Activated naive CD4-positive, alpha-beta T cell treated with anti-CD3 and anti-CD28 coated beads for 36 hours (primary cell): ENCODE measurements at regions of chr11 and their contacts with region 1.

Region 1: DNA sequence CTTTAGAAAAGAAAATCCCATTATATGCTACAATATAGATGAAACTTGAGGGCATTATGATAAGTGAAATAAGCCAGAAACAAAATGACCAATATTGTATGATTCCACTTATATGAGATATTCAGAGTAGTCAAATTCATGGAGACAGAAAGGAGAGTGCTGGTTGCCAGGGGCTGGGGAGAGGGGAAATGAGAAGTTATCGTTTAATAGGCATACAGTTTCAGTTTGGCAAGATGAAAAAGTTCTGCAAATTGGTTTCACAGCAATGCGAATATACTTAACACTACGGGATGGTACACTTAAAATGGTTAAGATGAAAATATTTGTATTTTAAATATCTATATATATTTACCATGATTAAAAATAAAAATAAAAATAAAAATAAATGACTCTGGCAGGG is 31.1 kb upstream of the RDX start:
- DNase-seq: no peak
- H3K4me3 Mint-ChIP-seq: peak overlapping the region; percentile 81
- H3K27ac Mint-ChIP-seq: peak overlapping the region; percentile 65
- H3K4me1 Mint-ChIP-seq: peaks cover 18% of the 10 kb centered on the region
- H3K27me3 Mint-ChIP-seq: peaks cover under 1% of the 10 kb centered on the region

Region 2: DNA sequence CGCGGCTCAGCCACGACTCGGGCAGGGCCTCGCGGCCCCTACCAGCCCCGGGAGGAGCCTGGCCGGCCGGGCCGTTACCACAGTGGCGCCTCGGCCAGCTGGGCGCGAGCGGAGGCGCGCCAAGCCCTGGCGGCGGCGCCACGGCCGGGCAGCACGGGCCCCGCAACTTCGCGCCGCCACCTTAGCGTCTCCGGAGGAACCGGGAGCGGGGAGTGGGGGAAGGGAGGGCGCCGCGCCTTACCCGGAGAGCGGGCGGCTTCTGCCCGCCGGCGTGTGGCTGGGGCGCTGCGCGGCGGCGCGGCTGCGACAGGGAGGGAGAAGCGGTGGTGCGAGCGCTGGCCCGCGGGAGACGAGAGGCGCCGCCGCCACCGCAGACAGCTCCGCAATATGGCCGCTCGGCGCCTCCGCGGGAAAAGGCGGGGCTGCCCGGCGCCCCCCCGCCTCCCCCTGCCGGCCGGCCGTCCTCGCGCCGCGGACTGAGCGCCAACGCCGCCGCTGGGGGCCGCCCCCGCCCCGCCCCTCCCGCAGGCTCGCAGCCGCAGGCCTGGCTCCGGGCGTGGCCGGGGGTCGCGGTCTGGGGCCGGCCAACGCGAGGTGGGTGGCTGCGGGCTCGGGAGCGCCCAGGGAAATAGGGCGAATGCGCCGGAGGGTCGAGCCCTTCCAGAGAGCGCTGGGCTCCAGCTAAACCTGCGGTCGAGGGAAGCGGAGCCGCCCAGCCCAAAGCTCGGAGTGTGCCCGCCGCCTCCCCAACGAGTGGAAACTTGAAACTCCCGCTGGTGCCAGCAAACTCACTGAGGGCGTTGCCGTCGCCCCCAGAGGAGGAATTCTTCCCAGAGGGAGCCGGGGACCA is 31.1 kb before region 1 on chr11 and contains the start of gene RDX:
- CTCF ChIA-PET with region 1: interaction called, 5 read pairs
- intact Hi-C with region 1: loop called (anchors 1 kb)
- DNase-seq: peak; percentile 53
- H3K4me3 Mint-ChIP-seq: peak within 1 kb of the TSS; percentile 91
- H3K27ac Mint-ChIP-seq: peak within 1 kb of the TSS; percentile 83
- H3K4me1 Mint-ChIP-seq: peaks cover 39% of the 10 kb centered on the region
- H3K27me3 Mint-ChIP-seq: no peaks in the 10 kb centered on the region
- total RNA-seq, gene RDX: 35.2 to 37.4 TPM

Region 3: DNA sequence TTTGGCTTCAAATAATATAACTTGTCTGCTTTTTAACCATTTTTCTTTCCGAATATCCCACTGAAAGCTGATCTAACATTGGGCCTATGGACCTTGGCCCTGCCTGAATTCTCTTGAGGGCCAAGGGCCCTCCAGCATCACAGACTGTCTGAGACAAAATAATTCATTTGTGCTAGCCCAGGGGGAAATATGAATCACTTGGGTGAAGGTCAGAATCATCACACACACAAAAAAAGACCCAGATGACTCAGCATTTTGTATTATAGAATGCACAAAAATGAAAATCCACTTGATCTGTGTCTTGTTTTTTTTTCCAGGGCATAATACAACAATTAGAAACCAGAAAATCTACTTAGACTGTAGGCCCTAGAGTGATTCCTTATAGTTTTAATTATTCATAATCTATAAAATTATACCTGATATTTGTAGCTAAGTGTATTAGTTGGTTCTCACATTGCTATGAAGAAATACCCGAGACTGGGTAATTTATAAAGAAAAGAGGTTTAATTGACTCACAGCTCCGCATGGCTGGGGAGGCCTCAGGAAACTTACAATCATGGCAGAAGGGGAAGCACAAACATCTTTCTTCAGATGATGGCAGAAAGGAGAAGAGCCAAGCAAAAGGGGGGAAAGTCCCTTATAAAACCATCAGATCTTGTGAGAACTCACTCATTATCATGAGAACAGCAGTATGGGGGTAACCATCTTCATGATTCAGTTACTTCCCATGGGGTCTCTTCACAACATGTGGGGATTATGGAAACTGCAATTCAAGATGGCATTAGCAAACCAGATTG is 15.5 kb before region 1 on chr11:
- CTCF ChIA-PET with region 1: no interaction called
- intact Hi-C with region 1: loop called (anchors 1 kb)
- DNase-seq: peak; percentile 34
- H3K4me3 Mint-ChIP-seq: no peak overlapping the region
- H3K27ac Mint-ChIP-seq: peak overlapping the region; percentile 83
- H3K4me1 Mint-ChIP-seq: peaks cover 12% of the 10 kb centered on the region
- H3K27me3 Mint-ChIP-seq: no peaks in the 10 kb centered on the region

Region 4: GRCh38 chr11:110337570-110338193 is 10.2 kb after region 1 on chr11:
- CTCF ChIA-PET with region 1: interaction called, 5 read pairs
- intact Hi-C with region 1: loop called (anchors 1 kb)
- DNase-seq: peak; percentile 81
- H3K4me3 Mint-ChIP-seq: no peak overlapping the region
- H3K27ac Mint-ChIP-seq: no peak overlapping the region
- H3K4me1 Mint-ChIP-seq: peaks cover 21% of the 10 kb centered on the region
- H3K27me3 Mint-ChIP-seq: peaks cover 2% of the 10 kb centered on the region